Activated CD8-positive, alpha-beta T cell treated with anti-CD3 and anti-CD28 coated beads for 36 hours (primary cell): ENCODE measurements at regions of chr12 and their contacts with region 1.

Region 1: GRCh38 chr12:53938326-53939140 is at the start of gene HOXC13:
- DNase-seq: peak; percentile 54
- ATAC-seq: peak; percentile 56
- H3K4me3 Mint-ChIP-seq: no peak within 1 kb of the TSS
- H3K27ac Mint-ChIP-seq: no peak within 1 kb of the TSS
- H3K4me1 Mint-ChIP-seq: peaks cover 4% of the 10 kb centered on the region
- H3K27me3 Mint-ChIP-seq: peaks cover 78% of the 10 kb centered on the region
- CTCF ChIP-seq: no peak
- total RNA-seq, gene HOXC13: not detected

Region 2: GRCh38 chr12:53575502-53576253 is 362.9 kb before region 1 on chr12:
- CTCF ChIA-PET with region 1: no interaction called
- POLR2A ChIA-PET with region 1: no interaction called
- intact Hi-C with region 1: no loop called
- DNase-seq: no peak
- ATAC-seq: no peak
- H3K4me3 Mint-ChIP-seq: no peak overlapping the region
- H3K27ac Mint-ChIP-seq: no peak overlapping the region
- H3K4me1 Mint-ChIP-seq: peaks cover 23% of the 10 kb centered on the region
- H3K27me3 Mint-ChIP-seq: no peaks in the 10 kb centered on the region
- CTCF ChIP-seq: no peak

Region 3: DNA sequence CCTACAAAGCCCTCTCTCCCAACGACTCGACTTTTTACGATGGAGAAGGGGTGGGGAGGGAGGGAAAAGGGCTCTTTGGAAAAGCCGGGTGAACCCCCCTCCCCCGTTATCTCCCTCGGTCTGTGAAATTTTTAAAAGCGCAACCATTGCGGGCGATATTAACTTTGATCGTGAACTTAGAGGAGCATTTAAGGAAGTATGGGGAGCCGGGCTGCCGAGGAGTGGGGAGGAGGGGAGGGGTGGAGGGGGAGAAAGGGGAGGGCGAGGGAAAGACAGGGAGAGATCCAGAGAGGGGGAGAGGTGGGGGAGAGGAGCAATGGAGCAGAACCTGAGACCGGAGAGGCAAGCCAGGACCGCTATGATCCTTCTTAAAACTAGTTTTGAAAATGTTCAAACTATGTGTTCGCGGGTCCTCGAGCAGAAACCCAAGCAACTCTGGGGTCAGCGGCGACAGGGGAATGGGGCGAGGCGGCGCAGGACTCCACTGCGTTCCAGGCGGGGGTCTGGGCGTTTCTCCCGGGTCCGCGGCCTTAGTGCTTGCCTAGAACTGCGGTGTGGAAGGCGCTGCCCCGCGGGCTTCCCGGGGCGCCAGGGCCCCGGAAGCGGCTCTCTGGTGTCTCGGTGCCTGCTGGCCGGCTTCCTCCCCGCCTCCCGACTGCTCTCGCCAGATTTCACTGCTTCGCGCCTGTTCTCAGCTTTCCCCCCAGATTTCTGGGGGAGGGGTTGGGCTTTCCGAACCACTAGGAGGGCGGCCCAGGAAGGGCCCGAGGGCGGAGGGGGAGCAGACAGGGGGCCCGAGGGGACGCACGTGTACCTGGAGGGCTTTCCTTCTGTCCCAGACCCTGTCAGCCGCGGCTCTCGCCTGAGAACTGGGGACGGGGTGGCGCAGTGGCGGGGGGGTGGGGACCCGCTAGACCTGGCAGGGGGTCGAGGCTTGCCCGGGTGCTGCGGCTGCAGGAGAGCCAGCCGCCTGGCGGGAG is 35.8 kb after region 1 on chr12 and contains the start of gene HOTAIR:
- CTCF ChIA-PET with region 1: no interaction called
- POLR2A ChIA-PET with region 1: no interaction called
- intact Hi-C with region 1: loop called (anchors 5 kb)
- DNase-seq: peak; percentile 48
- ATAC-seq: peak; percentile 66
- H3K4me3 Mint-ChIP-seq: peak within 1 kb of the TSS; percentile 43
- H3K27ac Mint-ChIP-seq: no peak within 1 kb of the TSS
- H3K4me1 Mint-ChIP-seq: peaks cover 15% of the 10 kb centered on the region
- H3K27me3 Mint-ChIP-seq: peaks cover 78% of the 10 kb centered on the region
- CTCF ChIP-seq: no peak
- total RNA-seq, gene HOTAIR: not detected